ENCODE measurements at regions of chr2 and their contacts with region 1.

Region 1: GRCh38 chr2:181426687-181427086 is 30.5 kb upstream of the ITGA4 start:
- DNase-seq: no peak
- H3K4me3 Mint-ChIP-seq: no peak overlapping the region
- H3K27ac Mint-ChIP-seq: no peak overlapping the region
- H3K4me1 Mint-ChIP-seq: peaks cover 21% of the 10 kb centered on the region
- H3K27me3 Mint-ChIP-seq: no peaks in the 10 kb centered on the region

Region 2: GRCh38 chr2:181176540-181176939 is 250.1 kb before region 1 on chr2:
- CTCF ChIA-PET with region 1: no interaction called
- POLR2A ChIA-PET with region 1: interaction called, 13 read pairs
- DNase-seq: no peak
- H3K4me3 Mint-ChIP-seq: no peak overlapping the region
- H3K27ac Mint-ChIP-seq: no peak overlapping the region
- H3K4me1 Mint-ChIP-seq: peaks cover 37% of the 10 kb centered on the region
- H3K27me3 Mint-ChIP-seq: no peaks in the 10 kb centered on the region